HepG2 (cell line): ENCODE measurements at regions of chr1 and their contacts with region 1.

Region 1: DNA sequence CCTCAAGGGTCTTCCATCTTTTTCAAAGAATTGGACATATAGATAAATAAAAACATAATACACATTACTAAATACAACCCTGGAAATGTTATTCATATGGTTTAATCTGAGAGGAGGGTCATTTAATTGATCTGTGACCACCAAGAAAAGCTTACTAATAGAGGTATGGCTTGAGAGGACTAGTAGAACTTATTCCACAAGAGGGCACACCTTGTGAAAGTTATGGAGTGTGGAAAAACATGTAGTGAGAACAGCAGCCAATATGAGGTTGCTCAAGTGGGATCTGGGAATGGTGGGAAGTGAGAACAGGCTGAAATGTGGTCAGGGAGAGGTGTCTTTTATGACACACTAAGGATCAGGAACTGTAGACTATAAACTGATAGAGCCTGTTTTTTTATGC is 973.5 kb upstream of the B3GALT2 start:
- DNase-seq: no peak
- ATAC-seq: no peak
- H3K4me3 ChIP-seq: no peak overlapping the region
- H3K27ac ChIP-seq: no peak overlapping the region
- H3K4me1 ChIP-seq: no peaks in the 10 kb centered on the region
- H3K27me3 ChIP-seq: no peaks in the 10 kb centered on the region
- CTCF ChIP-seq: no peak
- EP300 ChIP-seq: no peak
- POLR2A ChIP-seq: no peak
- RAD21 ChIP-seq: no peak

Region 2: DNA sequence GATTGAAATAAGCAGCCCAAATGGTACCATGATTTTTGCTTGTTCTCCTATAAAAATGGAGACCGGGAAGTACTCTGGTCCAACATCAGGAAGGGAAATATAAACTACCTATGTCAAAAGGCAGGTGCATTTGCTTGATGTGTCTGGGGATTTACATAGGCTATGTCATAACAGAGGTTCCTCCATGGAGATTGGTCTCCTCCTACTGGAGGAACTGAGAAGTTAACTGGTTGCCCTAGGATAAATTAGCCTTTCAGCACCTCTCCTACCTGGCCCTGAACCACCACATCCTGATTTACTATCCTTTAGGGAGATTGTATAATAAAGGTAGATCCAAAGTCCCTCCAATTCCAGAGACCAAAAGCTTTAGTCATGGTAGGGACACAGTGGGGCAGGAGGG is 135.7 kb after region 1 on chr1:
- CTCF ChIA-PET with region 1: no interaction called
- POLR2A ChIA-PET with region 1: no interaction called
- in situ Hi-C with region 1: no loop called
- intact Hi-C with region 1: loop called (anchors 10 kb)
- DNase-seq: peak; percentile 15
- ATAC-seq: peak; percentile 87
- H3K4me3 ChIP-seq: no peak overlapping the region
- H3K27ac ChIP-seq: no peak overlapping the region
- H3K4me1 ChIP-seq: no peaks in the 10 kb centered on the region
- H3K27me3 ChIP-seq: no peaks in the 10 kb centered on the region
- CTCF ChIP-seq: peak; percentile 45
- EP300 ChIP-seq: no peak
- POLR2A ChIP-seq: no peak
- RAD21 ChIP-seq: no peak